GM18951 (cell line): ENCODE measurements at regions of chr17 and their contacts with region 1.

Region 1: GRCh38 chr17:61837175-61838051 is 25.9 kb downstream of the BRIP1 start:
- POLR2A ChIP-seq: no peak

Region 2: DNA sequence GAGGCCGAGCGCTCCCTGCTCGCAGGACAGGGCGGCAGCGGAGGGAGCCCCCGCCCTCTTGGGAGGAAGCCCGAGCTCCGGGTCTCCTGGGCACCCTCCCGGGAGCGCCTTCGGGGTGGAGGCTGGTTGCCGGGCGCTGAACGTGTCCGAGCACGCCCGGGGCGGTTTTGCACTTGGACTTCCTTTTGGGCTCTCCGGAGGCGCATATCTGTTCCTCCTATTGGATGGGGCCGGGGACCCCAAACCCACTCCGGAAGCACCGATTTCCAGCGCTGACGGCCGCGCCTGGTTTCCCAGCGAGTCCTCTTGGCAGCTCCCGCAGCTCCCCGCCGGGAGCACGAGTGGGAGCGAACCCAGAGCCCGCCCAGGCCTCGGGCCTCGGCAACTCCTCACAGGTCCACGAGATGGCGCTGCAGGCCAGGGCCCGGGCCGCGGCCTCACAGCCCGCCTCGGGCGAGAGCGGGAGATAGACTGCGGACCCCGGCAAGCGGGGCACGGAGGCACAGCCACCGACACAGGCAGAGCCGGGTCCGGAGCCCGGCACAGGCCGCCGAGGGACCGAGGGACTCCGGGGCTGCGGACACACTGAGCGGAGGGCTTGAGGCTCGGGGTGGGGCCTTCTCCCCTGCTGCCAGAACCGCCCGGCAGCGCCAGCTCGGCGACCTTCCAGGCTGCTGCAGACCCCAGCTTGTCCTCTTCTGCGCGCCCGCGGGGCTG is 425.1 kb before region 1 on chr17:
- in situ Hi-C with region 1: loop called (anchors 25 kb)
- POLR2A ChIP-seq: peak; percentile 29

Region 3: GRCh38 chr17:61635913-61636432 is 201.4 kb before region 1 on chr17:
- in situ Hi-C with region 1: loop called (anchors 5 kb)
- POLR2A ChIP-seq: no peak

Region 4: GRCh38 chr17:61981323-61981722 is 143.9 kb after region 1 on chr17:
- in situ Hi-C with region 1: no loop called
- POLR2A ChIP-seq: no peak